ENCODE measurements at regions of chrX and their contacts with region 1.

Region 1: GRCh38 chrX:77668391-77669237 is 117.4 kb downstream of the ATRX start:
- DNase-seq: peak; percentile 72
- H3K4me3 ChIP-seq: no peak overlapping the region
- H3K27ac ChIP-seq: no peak overlapping the region
- H3K4me1 ChIP-seq: no peaks in the 10 kb centered on the region
- H3K27me3 ChIP-seq: no peaks in the 10 kb centered on the region
- CTCF ChIP-seq: no peak

Region 2: DNA sequence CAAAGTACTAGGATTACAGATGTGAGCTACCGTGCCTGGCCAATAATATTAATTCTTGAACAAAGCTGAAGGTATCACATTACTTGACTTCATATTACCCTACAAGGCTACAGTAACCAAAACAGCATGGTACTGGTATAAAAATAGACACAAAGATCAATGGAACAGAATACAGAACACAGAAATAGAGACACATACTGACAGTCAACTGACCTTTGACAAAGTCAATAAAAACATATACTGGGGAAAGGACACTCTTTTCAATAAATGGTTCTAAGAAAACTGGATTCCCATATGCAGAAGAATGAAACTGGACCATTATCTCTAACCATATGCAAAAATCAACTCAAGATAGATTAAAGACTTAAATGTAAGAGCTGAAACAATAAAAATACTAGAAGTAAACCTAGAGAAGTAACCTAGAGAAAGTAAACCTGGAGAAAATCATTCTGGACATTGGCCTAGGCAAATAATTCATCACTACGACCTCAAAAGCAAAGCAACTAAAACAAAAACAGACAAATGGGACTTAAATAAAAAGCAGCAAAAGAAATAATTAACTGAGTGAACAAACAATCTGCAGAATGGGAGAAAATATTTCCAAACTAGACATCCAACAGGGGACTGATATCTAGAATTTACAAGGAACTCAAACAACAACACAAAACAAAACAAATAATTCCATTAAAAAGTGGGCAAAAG is 64.8 kb before region 1 on chrX:
- CTCF ChIA-PET with region 1: no interaction called
- POLR2A ChIA-PET with region 1: no interaction called
- intact Hi-C with region 1: loop called (anchors 10 kb)
- DNase-seq: no peak
- H3K4me3 ChIP-seq: no peak overlapping the region
- H3K27ac ChIP-seq: no peak overlapping the region
- H3K4me1 ChIP-seq: no peaks in the 10 kb centered on the region
- H3K27me3 ChIP-seq: no peaks in the 10 kb centered on the region
- CTCF ChIP-seq: no peak

Region 3: GRCh38 chrX:77679145-77679544 is 10.5 kb after region 1 on chrX:
- CTCF ChIA-PET with region 1: no interaction called
- POLR2A ChIA-PET with region 1: no interaction called
- intact Hi-C with region 1: no loop called
- DNase-seq: no peak
- H3K4me3 ChIP-seq: no peak overlapping the region
- H3K27ac ChIP-seq: no peak overlapping the region
- H3K4me1 ChIP-seq: peaks cover 7% of the 10 kb centered on the region
- H3K27me3 ChIP-seq: no peaks in the 10 kb centered on the region
- CTCF ChIP-seq: no peak

Region 4: DNA sequence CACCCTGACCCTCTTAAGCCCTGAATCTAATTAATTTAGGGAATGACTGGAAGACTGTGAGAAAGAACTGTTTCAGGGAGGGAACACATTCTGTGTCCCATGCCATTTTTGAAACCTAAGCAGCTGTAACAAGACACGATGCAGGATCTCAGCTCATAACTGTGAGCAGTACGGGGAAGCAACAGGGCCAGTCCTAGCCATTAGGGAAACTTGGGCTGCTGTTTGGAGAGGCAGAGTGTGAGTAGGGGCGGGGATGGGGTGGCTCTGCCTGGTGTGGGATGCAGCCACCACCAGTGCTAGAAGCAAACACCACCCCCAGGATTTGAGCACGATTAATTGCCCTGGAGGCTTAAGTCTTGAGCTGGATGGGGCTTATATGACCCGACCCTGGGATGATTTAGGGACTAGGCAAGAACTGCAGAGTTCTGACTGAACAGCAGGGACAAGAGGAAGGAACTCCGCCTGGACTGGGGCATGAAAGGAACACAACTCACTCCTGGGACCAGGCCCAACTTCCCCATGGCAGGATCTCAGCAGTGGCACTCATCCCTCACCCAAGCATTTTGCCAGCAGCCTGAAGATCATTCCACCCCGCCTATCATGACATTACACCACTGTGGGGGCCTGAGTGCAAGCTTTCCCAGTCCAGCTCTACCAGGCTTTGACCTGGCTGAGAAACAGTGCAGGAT is 74.3 kb after region 1 on chrX:
- CTCF ChIA-PET with region 1: no interaction called
- POLR2A ChIA-PET with region 1: interaction called, 27 read pairs
- intact Hi-C with region 1: no loop called
- DNase-seq: no peak
- H3K4me3 ChIP-seq: no peak overlapping the region
- H3K27ac ChIP-seq: no peak overlapping the region
- H3K4me1 ChIP-seq: peaks cover 3% of the 10 kb centered on the region
- H3K27me3 ChIP-seq: no peaks in the 10 kb centered on the region
- CTCF ChIP-seq: no peak

Region 5: DNA sequence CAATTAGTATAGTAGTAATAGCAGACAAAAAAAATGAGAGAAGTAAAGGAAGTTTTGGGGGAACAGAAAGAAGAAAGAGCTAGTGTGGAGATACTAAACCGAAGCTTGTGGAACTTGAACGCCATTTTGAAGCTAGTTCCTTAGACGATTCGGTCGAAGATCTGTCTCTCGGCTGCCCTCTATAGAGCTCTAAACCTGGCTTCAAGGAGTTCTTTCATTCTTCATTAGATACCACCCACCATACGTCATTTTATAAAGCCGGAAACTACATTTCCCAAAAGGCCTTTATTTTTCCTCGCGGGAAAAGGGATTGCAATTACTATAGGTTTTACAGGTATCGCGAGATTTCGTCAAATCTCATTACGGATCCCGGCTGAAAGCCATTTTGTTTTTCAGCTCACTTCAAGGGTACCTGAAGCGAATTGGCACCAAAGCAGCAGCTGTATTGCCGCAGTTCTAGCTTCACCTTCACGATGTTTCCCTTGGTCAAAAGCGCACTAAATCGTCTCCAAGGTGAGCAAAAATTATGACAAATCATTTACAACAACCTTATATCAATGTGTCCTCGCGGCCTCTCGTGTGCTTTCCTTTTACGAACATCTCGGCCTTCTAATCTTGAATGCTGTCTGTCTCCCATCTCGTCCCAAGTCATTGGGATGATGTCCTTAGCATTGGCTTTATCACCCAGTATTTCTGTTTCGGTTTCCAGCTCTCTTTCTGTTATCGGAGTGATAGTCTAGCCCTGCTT is 230.6 kb after region 1 on chrX and contains the start of gene COX7B:
- CTCF ChIA-PET with region 1: no interaction called
- POLR2A ChIA-PET with region 1: no interaction called
- intact Hi-C with region 1: loop called (anchors 10 kb)
- DNase-seq: peak; percentile 96
- H3K4me3 ChIP-seq: peak within 1 kb of the TSS; percentile 55
- H3K27ac ChIP-seq: peak within 1 kb of the TSS; percentile 71
- H3K4me1 ChIP-seq: no peaks in the 10 kb centered on the region
- H3K27me3 ChIP-seq: no peaks in the 10 kb centered on the region
- CTCF ChIP-seq: peak; percentile 50
- total RNA-seq, gene COX7B: 381 and 432 TPM in 2 replicates

Measured in A673 (cell line).